H1 (cell line): ENCODE measurements at regions of chr17 and their contacts with region 1.

Region 1: DNA sequence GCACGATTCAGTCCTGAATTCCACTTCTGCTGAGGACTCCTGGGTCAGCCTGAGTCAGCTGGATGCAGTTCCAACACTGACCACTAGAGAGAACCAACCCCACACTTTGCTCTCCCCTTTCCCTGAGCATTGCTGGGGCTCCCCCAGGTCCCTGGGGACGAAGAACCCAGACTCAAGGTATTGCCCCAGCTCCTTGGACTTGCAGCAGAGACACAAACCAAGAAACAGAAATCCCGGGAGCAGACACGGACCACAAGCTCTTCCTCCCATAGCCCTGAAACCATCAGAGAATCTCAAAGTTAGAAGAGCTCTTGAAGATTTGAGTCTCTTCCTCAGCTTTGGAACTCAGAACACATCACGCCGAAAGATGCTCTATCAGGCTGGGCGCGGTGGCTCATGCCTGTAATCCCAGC is 678 bp upstream of the GH1 start:
- DNase-seq: peak in 1 of 2 experiments; percentile 85
- H3K4me3 ChIP-seq: no peak overlapping the region
- H3K27ac ChIP-seq: no peak overlapping the region
- H3K4me1 ChIP-seq: peaks cover 0 to 5% (median under 1%) of the 10 kb centered on the region in 4 experiments; a peak in 3 of 7 replicates
- H3K27me3 ChIP-seq: no peaks in the 10 kb centered on the region
- CTCF ChIP-seq: peak; percentile 88 to 94 (median 89)
- EP300 ChIP-seq: no peak
- POLR2A ChIP-seq: no peak
- RAD21 ChIP-seq: peak; percentile 89 to 94

Region 2: GRCh38 chr17:63834431-63835166 is 84.7 kb before region 1 on chr17:
- CTCF ChIA-PET with region 1: no interaction called
- POLR2A ChIA-PET with region 1: no interaction called
- DNase-seq: peak; percentile 54 to 70
- H3K4me3 ChIP-seq: no peak overlapping the region
- H3K27ac ChIP-seq: no peak overlapping the region
- H3K4me1 ChIP-seq: peaks cover 3 to 20% (median 16%) of the 10 kb centered on the region in 4 experiments
- H3K27me3 ChIP-seq: no peaks in the 10 kb centered on the region
- CTCF ChIP-seq: peak; percentile 74 to 98 (median 85)
- EP300 ChIP-seq: no peak
- POLR2A ChIP-seq: no peak
- RAD21 ChIP-seq: peak; percentile 30 to 52; a peak in 3 of 4 replicates

Region 3: DNA sequence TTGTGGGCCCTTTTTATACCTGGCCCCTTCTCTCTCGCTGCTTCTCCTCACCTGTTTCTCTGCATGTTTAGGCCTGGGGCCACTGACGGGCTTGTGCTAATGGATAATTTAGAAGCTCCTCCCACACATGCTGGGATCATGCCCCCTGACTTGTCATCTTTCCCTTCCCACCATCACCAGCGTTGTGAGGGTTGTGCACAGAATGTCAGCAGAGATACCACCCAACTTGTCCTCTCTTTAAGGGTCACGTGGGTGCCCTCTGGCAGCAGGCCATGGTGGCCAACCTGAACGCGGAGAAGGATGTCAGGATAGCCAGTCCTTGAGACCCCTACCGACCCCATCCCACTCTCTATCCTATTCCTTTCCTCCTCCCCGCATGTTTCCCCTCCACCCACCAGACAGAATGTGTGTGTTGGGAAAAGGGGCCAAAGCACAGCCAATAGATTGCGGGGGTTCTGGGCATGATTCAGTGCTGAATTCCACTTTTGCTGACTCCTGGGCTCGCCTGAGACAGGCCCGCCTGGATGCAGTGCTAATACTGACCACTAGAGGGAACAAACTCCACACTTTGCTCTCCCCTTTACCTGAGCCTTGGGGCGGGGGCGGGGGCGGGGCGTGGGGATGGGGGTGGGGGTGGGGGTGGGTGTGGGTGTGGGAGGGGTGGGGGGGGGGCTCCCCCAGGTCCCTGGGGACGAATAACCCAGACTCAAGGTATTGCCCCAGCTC is 37.3 kb before region 1 on chr17 and contains the start of gene GH2:
- CTCF ChIA-PET with region 1: interaction called, 12 read pairs
- POLR2A ChIA-PET with region 1: no interaction called
- DNase-seq: peak in 1 of 2 experiments; percentile 88
- H3K4me3 ChIP-seq: peak within 1 kb of the TSS in 2 of 4 experiments; percentile 2 to 33; a peak in 3 of 8 replicates
- H3K27ac ChIP-seq: no peak within 1 kb of the TSS
- H3K4me1 ChIP-seq: peaks cover 3 to 15% (median 8%) of the 10 kb centered on the region in 4 experiments
- H3K27me3 ChIP-seq: no peaks in the 10 kb centered on the region
- CTCF ChIP-seq: peak; percentile 59 to 76 (median 72)
- EP300 ChIP-seq: no peak
- POLR2A ChIP-seq: no peak
- RAD21 ChIP-seq: peak; percentile 10 to 30; a peak in 2 of 4 replicates
- total RNA-seq, gene GH2: 0.60 and 1.2 TPM in 2 replicates

Region 4: GRCh38 chr17:63931099-63931561 is 11.8 kb after region 1 on chr17:
- CTCF ChIA-PET with region 1: interaction called, 164 read pairs
- POLR2A ChIA-PET with region 1: interaction called, 3 read pairs
- DNase-seq: peak in 1 of 2 experiments; percentile 75
- H3K4me3 ChIP-seq: no peak overlapping the region
- H3K27ac ChIP-seq: no peak overlapping the region
- H3K4me1 ChIP-seq: peaks cover 0 to 16% (median 12%) of the 10 kb centered on the region in 4 experiments; a peak in 6 of 7 replicates
- H3K27me3 ChIP-seq: no peaks in the 10 kb centered on the region
- CTCF ChIP-seq: no peak
- EP300 ChIP-seq: no peak
- POLR2A ChIP-seq: no peak
- RAD21 ChIP-seq: no peak

Region 5: DNA sequence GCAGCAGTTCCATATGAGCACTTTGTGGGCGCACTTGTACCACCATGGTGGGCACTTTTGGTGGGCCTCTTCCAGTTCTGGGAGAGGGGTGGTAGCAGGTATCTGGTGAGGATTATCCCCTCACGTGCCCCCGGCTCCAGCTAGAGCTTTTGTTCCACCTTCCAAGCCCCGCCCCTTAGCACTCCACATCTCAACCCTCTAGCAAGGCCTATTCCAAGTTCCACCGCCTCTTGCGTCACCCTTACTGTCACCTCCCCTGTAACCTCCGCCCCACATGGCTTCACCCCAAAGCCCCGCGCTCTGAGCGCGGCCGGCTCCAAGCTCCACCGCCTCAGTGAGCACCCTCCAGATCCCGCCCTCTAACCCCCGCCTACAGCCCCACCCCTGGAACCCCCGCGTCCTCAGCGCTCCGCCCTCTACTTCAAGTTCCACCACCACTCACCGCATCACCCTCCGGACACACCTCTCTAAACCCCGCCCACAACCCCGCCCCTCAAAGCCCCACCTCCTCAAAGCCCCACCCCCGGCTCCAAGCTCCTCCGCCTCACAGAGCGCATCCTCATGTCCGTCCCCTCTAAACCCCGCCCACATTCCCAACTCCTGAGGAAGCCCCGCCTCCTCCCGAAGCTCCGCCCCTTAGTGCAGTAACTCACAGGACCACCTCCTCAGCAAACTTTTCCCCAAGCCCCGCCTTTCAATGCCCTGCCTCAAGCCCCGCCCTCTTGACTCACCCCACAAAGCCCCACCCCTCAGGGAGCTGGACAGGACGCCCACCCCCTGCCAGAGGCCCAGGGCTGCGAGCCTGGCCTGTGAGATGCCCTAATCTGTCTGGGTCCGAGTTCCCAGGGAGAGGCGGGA is 42.3 kb after region 1 on chr17:
- CTCF ChIA-PET with region 1: interaction called, 270 read pairs
- POLR2A ChIA-PET with region 1: no interaction called
- DNase-seq: peak; percentile 100
- H3K4me3 ChIP-seq: peak overlapping the region; percentile 29 to 62 (median 50); a peak in 7 of 8 replicates
- H3K27ac ChIP-seq: peak overlapping the region; percentile 37; the same call in 1 of the 2 replicates
- H3K4me1 ChIP-seq: peaks cover 0 to 20% (median 9%) of the 10 kb centered on the region in 4 experiments; a peak in 6 of 7 replicates
- H3K27me3 ChIP-seq: no peaks in the 10 kb centered on the region
- CTCF ChIP-seq: no peak
- EP300 ChIP-seq: peak in 1 of 2 experiments; percentile 56; a peak in 1 of 3 replicates
- POLR2A ChIP-seq: peak in 1 of 2 experiments; percentile 65; a peak in 2 of 3 replicates
- RAD21 ChIP-seq: no peak

Region 6: GRCh38 chr17:63974594-63975192 is 55.4 kb after region 1 on chr17:
- CTCF ChIA-PET with region 1: interaction called, 29 read pairs
- POLR2A ChIA-PET with region 1: no interaction called
- DNase-seq: no peak
- H3K4me3 ChIP-seq: no peak overlapping the region
- H3K27ac ChIP-seq: no peak overlapping the region
- H3K4me1 ChIP-seq: peaks cover 0 to 7% (median under 1%) of the 10 kb centered on the region in 4 experiments; a peak in 4 of 7 replicates
- H3K27me3 ChIP-seq: no peaks in the 10 kb centered on the region; a peak in 1 of 7 replicates
- CTCF ChIP-seq: no peak
- EP300 ChIP-seq: no peak
- POLR2A ChIP-seq: no peak
- RAD21 ChIP-seq: no peak

Region 7: GRCh38 chr17:64005734-64006167 is 86.4 kb after region 1 on chr17:
- CTCF ChIA-PET with region 1: interaction called, 11 read pairs
- POLR2A ChIA-PET with region 1: no interaction called
- DNase-seq: no peak
- H3K4me3 ChIP-seq: no peak overlapping the region
- H3K27ac ChIP-seq: no peak overlapping the region
- H3K4me1 ChIP-seq: peaks cover 0 to 12% (median 5%) of the 10 kb centered on the region in 4 experiments; a peak in 4 of 7 replicates
- H3K27me3 ChIP-seq: no peaks in the 10 kb centered on the region; a peak in 1 of 7 replicates
- CTCF ChIP-seq: no peak
- EP300 ChIP-seq: no peak
- POLR2A ChIP-seq: no peak
- RAD21 ChIP-seq: no peak

Region 8: GRCh38 chr17:64084086-64084939 is 165.0 kb after region 1 on chr17:
- CTCF ChIA-PET with region 1: no interaction called
- POLR2A ChIA-PET with region 1: no interaction called
- DNase-seq: no peak
- H3K4me3 ChIP-seq: no peak overlapping the region
- H3K27ac ChIP-seq: no peak overlapping the region
- H3K4me1 ChIP-seq: peaks cover 0 to 7% (median 0%) of the 10 kb centered on the region in 4 experiments; a peak in 2 of 7 replicates
- H3K27me3 ChIP-seq: no peaks in the 10 kb centered on the region; a peak in 1 of 7 replicates
- CTCF ChIP-seq: no peak
- EP300 ChIP-seq: no peak
- POLR2A ChIP-seq: no peak
- RAD21 ChIP-seq: no peak

Region 9: GRCh38 chr17:64129764-64130558 is 210.6 kb after region 1 on chr17 and contains the start of gene ERN1:
- CTCF ChIA-PET with region 1: interaction called, 18 read pairs
- POLR2A ChIA-PET with region 1: no interaction called
- DNase-seq: peak; percentile 81 to 91
- H3K4me3 ChIP-seq: peak within 1 kb of the TSS; percentile 69 to 79 (median 74)
- H3K27ac ChIP-seq: no peak within 1 kb of the TSS
- H3K4me1 ChIP-seq: no peaks in the 10 kb centered on the region
- H3K27me3 ChIP-seq: peaks cover 0 to 21% (median 11%) of the 10 kb centered on the region in 4 experiments; a peak in 6 of 7 replicates
- CTCF ChIP-seq: 0 out of 4 replicates have a peak, but pooled peaks of 1 of the 3 experiments have one; percentile 11
- EP300 ChIP-seq: no peak
- POLR2A ChIP-seq: peak; percentile 75 to 76
- RAD21 ChIP-seq: peak in 1 of 2 experiments; percentile 5; a peak in 1 of 4 replicates
- total RNA-seq, gene ERN1: 3.9 and 5.7 TPM in 2 replicates